GM12878 (cell line): ENCODE measurements at regions of chr1 and their contacts with region 1.

Region 1: GRCh38 chr1:219416594-219417238 is 196.2 kb downstream of the ZC3H11B start:
- DNase-seq: peak; percentile 15
- ATAC-seq: peak; percentile 99
- H3K4me3 ChIP-seq: no peak overlapping the region
- H3K27ac ChIP-seq: no peak overlapping the region
- H3K4me1 ChIP-seq: no peaks in the 10 kb centered on the region
- H3K27me3 ChIP-seq: no peaks in the 10 kb centered on the region
- CTCF ChIP-seq: peak; percentile 59 to 73 (median 70)
- EP300 ChIP-seq: no peak
- POLR2A ChIP-seq: no peak
- RAD21 ChIP-seq: peak; percentile 53

Region 2: DNA sequence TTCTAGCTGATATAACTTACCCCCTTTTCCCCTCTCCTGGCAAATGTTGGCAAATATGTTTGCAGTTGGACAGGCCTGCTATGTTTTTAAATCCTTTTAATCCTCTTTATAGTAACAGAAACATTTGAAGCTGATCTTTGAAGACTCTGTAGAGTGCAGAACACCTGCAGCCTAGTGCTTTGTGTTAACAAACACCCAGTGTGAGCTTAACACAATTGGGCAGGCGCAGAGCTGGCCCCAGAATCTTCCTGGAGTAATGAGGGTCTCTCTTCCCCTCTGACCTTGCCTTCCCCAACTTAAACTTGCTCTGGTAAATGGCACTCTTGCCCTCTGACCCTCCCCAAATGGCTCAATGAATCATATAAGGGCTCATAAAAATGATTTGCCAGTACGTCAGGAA is 490.9 kb before region 1 on chr1:
- CTCF ChIA-PET with region 1: no interaction called
- POLR2A ChIA-PET with region 1: no interaction called
- RAD21 ChIA-PET with region 1: no interaction called
- SMC1A ChIA-PET with region 1: no interaction called
- in situ Hi-C with region 1: no loop called
- intact Hi-C with region 1: no loop called
- DNase-seq: no peak
- ATAC-seq: no peak
- H3K4me3 ChIP-seq: no peak overlapping the region
- H3K27ac ChIP-seq: no peak overlapping the region
- H3K4me1 ChIP-seq: no peaks in the 10 kb centered on the region
- H3K27me3 ChIP-seq: no peaks in the 10 kb centered on the region; a peak in 1 of 4 replicates
- CTCF ChIP-seq: no peak
- EP300 ChIP-seq: no peak
- POLR2A ChIP-seq: no peak
- RAD21 ChIP-seq: no peak

Region 3: GRCh38 chr1:219805193-219805592 is 388.5 kb after region 1 on chr1:
- CTCF ChIA-PET with region 1: no interaction called
- POLR2A ChIA-PET with region 1: no interaction called
- RAD21 ChIA-PET with region 1: no interaction called
- SMC1A ChIA-PET with region 1: no interaction called
- in situ Hi-C with region 1: no loop called
- intact Hi-C with region 1: loop called (anchors 10 kb)
- DNase-seq: no peak
- ATAC-seq: no peak
- H3K4me3 ChIP-seq: no peak overlapping the region
- H3K27ac ChIP-seq: no peak overlapping the region
- H3K4me1 ChIP-seq: no peaks in the 10 kb centered on the region
- H3K27me3 ChIP-seq: no peaks in the 10 kb centered on the region; a peak in 1 of 4 replicates
- CTCF ChIP-seq: 0 out of 6 replicates have a peak, but pooled peaks of 1 of the 3 experiments have one; percentile 4
- EP300 ChIP-seq: no peak
- POLR2A ChIP-seq: no peak
- RAD21 ChIP-seq: no peak